Mammary epithelial cell (primary cell): ENCODE measurements at regions of chr15 and their contacts with region 1.

Region 1: DNA sequence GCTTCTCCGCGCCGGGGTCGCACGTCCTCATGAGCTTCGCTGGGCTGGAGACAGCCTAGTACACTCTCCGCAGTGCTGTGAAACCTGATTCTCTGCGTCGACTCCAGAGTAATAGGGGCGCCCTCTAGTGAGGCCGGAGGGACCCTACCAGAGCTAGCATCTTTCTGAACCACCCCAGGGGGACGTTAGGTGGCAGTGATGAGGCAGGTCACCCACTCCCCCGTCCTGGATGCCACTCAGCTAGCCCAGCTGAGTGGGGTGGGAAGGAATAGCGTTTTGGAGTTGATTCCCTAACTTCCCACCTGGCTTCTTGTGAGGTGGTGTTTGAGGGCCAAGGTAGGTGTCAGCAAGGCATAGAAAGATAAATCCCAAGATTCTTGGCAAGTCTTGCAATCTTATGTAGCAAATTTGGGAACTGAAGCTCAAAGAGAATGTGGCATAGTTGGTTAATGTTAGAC is 4.0 kb downstream of the DUOXA2 start:
- DNase-seq: peak; percentile 74
- H3K4me3 ChIP-seq: no peak overlapping the region
- H3K27ac ChIP-seq: no peak overlapping the region
- H3K4me1 ChIP-seq: peaks cover 16% of the 10 kb centered on the region
- H3K27me3 ChIP-seq: peaks cover 38% of the 10 kb centered on the region
- CTCF ChIP-seq: peak; percentile 100

Region 2: DNA sequence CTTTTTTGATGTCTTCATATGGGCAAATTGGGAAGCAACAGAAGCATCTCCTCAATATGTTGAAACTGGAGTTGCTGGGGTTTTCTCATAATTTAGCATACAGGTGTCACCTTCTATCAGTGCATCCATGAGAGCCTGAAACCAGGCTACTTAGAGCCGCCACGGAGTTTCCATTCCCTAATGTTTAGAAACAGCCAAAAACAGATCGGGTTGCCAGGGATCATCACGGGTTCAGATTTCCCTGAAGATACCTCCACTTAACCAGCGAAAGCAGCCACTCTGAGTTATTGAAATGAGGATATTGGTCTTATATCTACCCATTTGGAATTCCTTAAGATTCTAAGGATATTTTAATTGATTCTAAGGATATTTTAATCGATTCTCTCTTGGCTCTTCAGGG is 147.1 kb before region 1 on chr15:
- CTCF ChIA-PET with region 1: interaction called, 6 read pairs
- dilution Hi-C with region 1: no loop called
- in situ Hi-C with region 1: loop called in 1 of 2 experiments (anchors 25 kb)
- intact Hi-C with region 1: loop called (anchors 2 kb)
- DNase-seq: no peak
- H3K4me3 ChIP-seq: no peak overlapping the region
- H3K27ac ChIP-seq: no peak overlapping the region
- H3K4me1 ChIP-seq: no peaks in the 10 kb centered on the region
- H3K27me3 ChIP-seq: no peaks in the 10 kb centered on the region
- CTCF ChIP-seq: no peak

Region 3: DNA sequence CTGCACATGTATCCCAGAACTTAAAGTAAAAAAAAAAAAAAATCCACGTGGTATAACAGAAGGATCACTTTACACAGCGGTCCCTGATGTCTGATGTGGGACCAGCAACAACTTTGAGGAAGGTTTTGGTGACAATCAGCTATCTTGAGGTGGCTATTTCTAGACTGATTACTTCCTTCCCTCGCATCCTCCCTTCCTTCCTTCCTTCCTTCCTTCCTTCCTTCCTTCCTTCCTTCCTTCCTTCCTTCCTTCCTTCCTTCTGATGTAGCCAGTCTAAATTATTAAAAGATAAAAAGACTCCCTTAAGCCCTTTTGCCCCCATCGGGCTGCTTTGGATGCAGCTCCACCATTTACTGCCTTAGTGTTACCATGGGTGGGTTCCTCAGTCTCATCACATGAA is 80.2 kb before region 1 on chr15:
- CTCF ChIA-PET with region 1: interaction called, 6 read pairs
- dilution Hi-C with region 1: no loop called
- in situ Hi-C with region 1: no loop called
- intact Hi-C with region 1: loop called (anchors 2 kb)
- DNase-seq: no peak
- H3K4me3 ChIP-seq: no peak overlapping the region
- H3K27ac ChIP-seq: no peak overlapping the region
- H3K4me1 ChIP-seq: no peaks in the 10 kb centered on the region
- H3K27me3 ChIP-seq: no peaks in the 10 kb centered on the region
- CTCF ChIP-seq: no peak

Region 4: GRCh38 chr15:45279024-45279698 is 161.0 kb after region 1 on chr15:
- CTCF ChIA-PET with region 1: interaction called, 3 read pairs
- dilution Hi-C with region 1: no loop called
- in situ Hi-C with region 1: no loop called
- intact Hi-C with region 1: loop called (anchors 2 kb)
- DNase-seq: peak; percentile 98
- H3K4me3 ChIP-seq: peak overlapping the region; percentile 76 to 91 (median 87)
- H3K27ac ChIP-seq: peak overlapping the region; percentile 72
- H3K4me1 ChIP-seq: peaks cover 6% of the 10 kb centered on the region
- H3K27me3 ChIP-seq: no peaks in the 10 kb centered on the region
- CTCF ChIP-seq: no peak

Region 5: DNA sequence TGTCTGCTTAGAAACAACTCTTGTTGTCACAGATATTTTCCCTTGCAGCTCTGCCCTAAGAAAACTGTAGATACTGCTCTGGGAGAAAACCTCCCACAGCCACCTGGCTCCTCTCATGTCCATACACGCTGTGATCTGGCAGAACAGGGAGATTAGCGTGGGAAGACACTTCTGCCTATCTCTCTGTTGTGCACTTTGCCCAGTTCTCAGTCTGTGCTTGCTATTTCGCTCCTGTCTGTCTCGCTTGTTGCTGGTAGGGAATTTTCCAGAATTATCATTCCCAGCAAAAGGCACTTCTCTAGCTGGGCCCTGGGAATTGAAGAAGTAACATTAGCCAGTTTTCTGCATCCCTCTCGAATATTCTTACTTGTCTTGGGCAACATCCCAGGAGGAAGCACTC is 268.3 kb after region 1 on chr15:
- CTCF ChIA-PET with region 1: no interaction called
- dilution Hi-C with region 1: no loop called
- in situ Hi-C with region 1: no loop called
- intact Hi-C with region 1: loop called (anchors 5 kb)
- DNase-seq: peak; percentile 29
- H3K4me3 ChIP-seq: no peak overlapping the region
- H3K27ac ChIP-seq: no peak overlapping the region
- H3K4me1 ChIP-seq: peaks cover 12% of the 10 kb centered on the region
- H3K27me3 ChIP-seq: no peaks in the 10 kb centered on the region
- CTCF ChIP-seq: no peak